CD4-positive, alpha-beta T cell (primary cell): ENCODE measurements at regions of chr2 and their contacts with region 1.

Region 1: DNA sequence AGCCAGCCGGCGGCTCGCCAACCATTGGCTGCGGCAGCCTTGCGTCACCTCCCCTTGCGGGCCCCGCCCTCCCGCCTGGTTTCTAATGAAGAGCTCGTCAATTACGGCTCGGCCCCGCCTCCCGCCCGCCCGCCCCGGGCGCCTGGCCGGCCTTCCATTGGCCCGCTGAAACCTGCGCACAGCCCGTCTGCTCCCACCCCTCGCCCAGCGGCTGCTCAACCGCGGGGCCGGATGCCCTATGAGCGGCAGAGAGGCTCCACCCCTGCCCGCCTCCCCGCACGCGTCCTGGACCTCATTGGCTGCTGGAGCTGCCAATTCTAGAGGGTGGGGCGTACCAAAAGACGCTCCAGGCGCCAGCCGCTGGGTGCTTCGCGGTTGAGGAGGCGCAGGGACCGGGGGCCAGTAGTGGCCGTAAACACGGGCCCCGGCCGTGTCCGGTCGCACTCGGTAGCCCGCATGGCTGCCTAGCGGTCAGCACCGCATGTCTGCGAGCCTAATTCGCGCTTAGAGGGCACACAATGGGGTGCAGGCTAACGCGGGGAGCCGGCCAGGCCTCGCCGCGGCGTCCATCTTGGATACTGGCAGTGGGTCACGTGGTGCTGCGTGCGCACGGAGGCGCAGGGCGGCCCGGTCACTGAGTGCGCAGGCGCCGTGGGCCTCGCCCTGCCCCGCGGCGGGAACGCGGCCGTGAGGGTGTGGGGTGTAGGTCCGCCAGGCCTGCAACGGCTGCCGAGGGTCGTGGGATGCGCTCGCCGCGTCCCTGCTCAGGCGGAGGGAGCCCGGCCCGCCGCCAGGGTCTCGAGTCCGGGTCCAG is 454 bp upstream of the HDAC4 start:
- DNase-seq: peak; percentile 98 to 100 (median 99)
- ATAC-seq: peak; percentile 86
- H3K4me3 ChIP-seq: peak overlapping the region; percentile 67
- H3K4me3 Mint-ChIP-seq: peak overlapping the region; percentile 98
- H3K27ac ChIP-seq: peak overlapping the region; percentile 97 to 99
- H3K27ac Mint-ChIP-seq: peak overlapping the region; percentile 99
- H3K4me1 ChIP-seq: peaks cover 37% of the 10 kb centered on the region
- H3K4me1 Mint-ChIP-seq: peaks cover 48% of the 10 kb centered on the region
- H3K27me3 ChIP-seq: no peaks in the 10 kb centered on the region
- H3K27me3 Mint-ChIP-seq: no peaks in the 10 kb centered on the region
- CTCF ChIP-seq: no peak

Region 2: DNA sequence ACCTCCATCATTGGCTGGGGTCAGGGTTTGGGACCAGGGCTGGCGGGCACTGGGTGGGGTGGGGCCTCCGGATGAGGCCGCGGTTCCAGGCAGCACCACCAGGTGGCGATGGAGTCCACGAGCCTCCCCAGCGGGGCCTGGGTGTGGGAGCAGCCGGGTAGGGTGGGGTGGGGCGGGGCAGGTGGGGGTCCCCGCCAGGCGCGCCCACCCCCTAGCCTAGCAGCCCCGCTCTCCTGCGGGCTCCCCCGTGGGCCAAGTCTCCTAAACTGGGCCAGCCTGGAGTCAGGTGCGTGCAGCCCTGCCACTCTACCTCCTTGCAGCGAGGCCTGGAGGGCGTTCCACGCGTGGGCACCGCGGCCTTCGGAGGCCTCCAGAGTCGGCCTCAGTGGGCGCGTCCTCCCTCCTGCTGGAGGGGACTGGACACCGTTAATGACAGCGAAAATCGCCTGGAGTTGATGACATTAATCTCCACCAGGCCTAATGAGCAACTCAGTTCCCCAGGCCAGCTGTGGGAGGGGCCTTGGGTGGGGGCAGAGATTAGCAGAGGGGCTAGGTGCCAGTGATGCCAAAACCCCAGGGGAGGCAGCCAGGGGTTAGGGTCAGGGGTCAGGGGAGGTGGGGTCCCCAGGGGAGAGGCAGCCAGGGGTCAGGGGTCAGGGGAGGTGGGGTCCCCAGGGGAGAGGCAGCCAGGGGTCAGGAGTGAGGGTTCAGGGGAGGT is 365.8 kb before region 1 on chr2:
- CTCF ChIA-PET with region 1: no interaction called
- POLR2A ChIA-PET with region 1: no interaction called
- intact Hi-C with region 1: loop called in 1 of 2 experiments (anchors 1 kb)
- DNase-seq: peak; percentile 47 to 78 (median 62)
- ATAC-seq: peak; percentile 92
- H3K4me3 ChIP-seq: no peak overlapping the region
- H3K4me3 Mint-ChIP-seq: no peak overlapping the region
- H3K27ac ChIP-seq: no peak overlapping the region
- H3K27ac Mint-ChIP-seq: no peak overlapping the region
- H3K4me1 ChIP-seq: peaks cover 7% of the 10 kb centered on the region
- H3K4me1 Mint-ChIP-seq: no peaks in the 10 kb centered on the region
- H3K27me3 ChIP-seq: peaks cover 8 to 13% of the 10 kb centered on the region in 2 experiments
- H3K27me3 Mint-ChIP-seq: peaks cover 8% of the 10 kb centered on the region
- CTCF ChIP-seq: peak; percentile 88

Region 3: GRCh38 chr2:239275044-239275685 is 126.1 kb before region 1 on chr2:
- CTCF ChIA-PET with region 1: interaction called, 11 read pairs
- POLR2A ChIA-PET with region 1: interaction called, 18 read pairs
- intact Hi-C with region 1: no loop called
- DNase-seq: peak; percentile 70 to 95 (median 80)
- ATAC-seq: peak; percentile 88
- H3K4me3 ChIP-seq: peak overlapping the region; percentile 47
- H3K4me3 Mint-ChIP-seq: peak overlapping the region; percentile 79
- H3K27ac ChIP-seq: peak overlapping the region; percentile 19 to 55
- H3K27ac Mint-ChIP-seq: peak overlapping the region; percentile 93
- H3K4me1 ChIP-seq: peaks cover 46% of the 10 kb centered on the region
- H3K4me1 Mint-ChIP-seq: peaks cover 64% of the 10 kb centered on the region
- H3K27me3 ChIP-seq: no peaks in the 10 kb centered on the region
- H3K27me3 Mint-ChIP-seq: no peaks in the 10 kb centered on the region
- CTCF ChIP-seq: no peak

Region 4: GRCh38 chr2:239326831-239327535 is 74.3 kb before region 1 on chr2:
- CTCF ChIA-PET with region 1: interaction called, 8 read pairs
- POLR2A ChIA-PET with region 1: interaction called, 19 read pairs
- intact Hi-C with region 1: loop called (anchors 1 to 5 kb)
- DNase-seq: peak; percentile 46 to 89 (median 74)
- ATAC-seq: peak; percentile 77
- H3K4me3 ChIP-seq: no peak overlapping the region
- H3K4me3 Mint-ChIP-seq: peak overlapping the region; percentile 75
- H3K27ac ChIP-seq: peak overlapping the region; percentile 71 to 73
- H3K27ac Mint-ChIP-seq: peak overlapping the region; percentile 93
- H3K4me1 ChIP-seq: peaks cover 78% of the 10 kb centered on the region
- H3K4me1 Mint-ChIP-seq: peaks cover 85% of the 10 kb centered on the region
- H3K27me3 ChIP-seq: no peaks in the 10 kb centered on the region
- H3K27me3 Mint-ChIP-seq: no peaks in the 10 kb centered on the region
- CTCF ChIP-seq: no peak

Region 5: GRCh38 chr2:239380831-239381708 is 20.2 kb before region 1 on chr2:
- CTCF ChIA-PET with region 1: interaction called, 16 read pairs
- POLR2A ChIA-PET with region 1: interaction called, 38 read pairs
- intact Hi-C with region 1: loop called in 1 of 2 experiments (anchors 1 kb)
- DNase-seq: peak; percentile 56 to 89 (median 70)
- ATAC-seq: peak; percentile 93
- H3K4me3 ChIP-seq: peak overlapping the region; percentile 51
- H3K4me3 Mint-ChIP-seq: peak overlapping the region; percentile 86
- H3K27ac ChIP-seq: peak overlapping the region; percentile 61 to 65
- H3K27ac Mint-ChIP-seq: peak overlapping the region; percentile 92
- H3K4me1 ChIP-seq: peaks cover 17% of the 10 kb centered on the region
- H3K4me1 Mint-ChIP-seq: peaks cover 23% of the 10 kb centered on the region
- H3K27me3 ChIP-seq: no peaks in the 10 kb centered on the region
- H3K27me3 Mint-ChIP-seq: no peaks in the 10 kb centered on the region
- CTCF ChIP-seq: no peak

Region 6: GRCh38 chr2:240021488-240022104 is 620.3 kb after region 1 on chr2:
- CTCF ChIA-PET with region 1: no interaction called
- POLR2A ChIA-PET with region 1: interaction called, 7 read pairs
- intact Hi-C with region 1: loop called in 1 of 2 experiments (anchors 2 kb)
- DNase-seq: peak; percentile 26 to 79 (median 58)
- ATAC-seq: peak; percentile 40
- H3K4me3 ChIP-seq: no peak overlapping the region
- H3K4me3 Mint-ChIP-seq: peak overlapping the region; percentile 54
- H3K27ac ChIP-seq: no peak overlapping the region
- H3K27ac Mint-ChIP-seq: peak overlapping the region; percentile 30
- H3K4me1 ChIP-seq: peaks cover 21% of the 10 kb centered on the region
- H3K4me1 Mint-ChIP-seq: peaks cover 44% of the 10 kb centered on the region
- H3K27me3 ChIP-seq: no peaks in the 10 kb centered on the region
- H3K27me3 Mint-ChIP-seq: no peaks in the 10 kb centered on the region
- CTCF ChIP-seq: peak; percentile 61

Region 7: GRCh38 chr2:240560480-240561326 is 1159.4 kb after region 1 on chr2:
- CTCF ChIA-PET with region 1: no interaction called
- POLR2A ChIA-PET with region 1: interaction called, 4 read pairs
- intact Hi-C with region 1: loop called in 1 of 2 experiments (anchors 10 kb)
- DNase-seq: peak in 13 of 14 experiments; percentile 99 to 100 (median 100)
- ATAC-seq: peak; percentile 50
- H3K4me3 ChIP-seq: peak overlapping the region; percentile 53
- H3K4me3 Mint-ChIP-seq: peak overlapping the region; percentile 90
- H3K27ac ChIP-seq: peak overlapping the region; percentile 62 to 95
- H3K27ac Mint-ChIP-seq: peak overlapping the region; percentile 98
- H3K4me1 ChIP-seq: peaks cover 87% of the 10 kb centered on the region
- H3K4me1 Mint-ChIP-seq: peaks cover 80% of the 10 kb centered on the region
- H3K27me3 ChIP-seq: no peaks in the 10 kb centered on the region
- H3K27me3 Mint-ChIP-seq: no peaks in the 10 kb centered on the region
- CTCF ChIP-seq: no peak